Naive thymus-derived CD8-positive, alpha-beta T cell (primary cell): ENCODE measurements at regions of chr17 and their contacts with region 1.

Region 1: DNA sequence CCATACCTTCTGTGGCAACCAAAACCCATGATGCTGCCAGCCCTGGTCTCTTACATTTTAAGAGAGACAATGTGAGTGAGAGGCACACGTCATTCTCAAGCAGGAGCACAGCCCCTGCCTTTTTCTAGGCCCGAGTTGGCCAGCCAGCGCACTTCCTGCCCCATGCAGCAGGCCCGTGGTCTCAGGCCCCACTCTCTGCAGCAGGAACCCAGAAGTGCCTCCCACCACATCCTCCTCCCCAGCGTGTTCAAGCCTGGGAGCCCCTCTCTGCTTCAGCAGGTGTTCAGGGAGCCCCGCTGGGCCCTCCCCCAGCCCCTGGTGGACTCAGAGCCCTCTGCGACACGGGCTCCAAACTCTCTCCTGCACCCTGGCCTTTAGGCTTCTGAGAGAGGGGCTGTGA is 30.5 kb downstream of the ITGAE start:
- DNase-seq: peak in 9 of 10 donors; percentile 51 to 83 (median 74)
- ATAC-seq: peak; percentile 68 to 83
- H3K4me3 Mint-ChIP-seq: peak overlapping the region; percentile 38 to 85 (median 58)
- H3K27ac Mint-ChIP-seq: peak overlapping the region; percentile 82 to 98 (median 94)
- H3K4me1 Mint-ChIP-seq: peaks cover 39 to 75% (median 69%) of the 10 kb centered on the region in 4 donors
- H3K27me3 Mint-ChIP-seq: no peaks in the 10 kb centered on the region

Region 2: DNA sequence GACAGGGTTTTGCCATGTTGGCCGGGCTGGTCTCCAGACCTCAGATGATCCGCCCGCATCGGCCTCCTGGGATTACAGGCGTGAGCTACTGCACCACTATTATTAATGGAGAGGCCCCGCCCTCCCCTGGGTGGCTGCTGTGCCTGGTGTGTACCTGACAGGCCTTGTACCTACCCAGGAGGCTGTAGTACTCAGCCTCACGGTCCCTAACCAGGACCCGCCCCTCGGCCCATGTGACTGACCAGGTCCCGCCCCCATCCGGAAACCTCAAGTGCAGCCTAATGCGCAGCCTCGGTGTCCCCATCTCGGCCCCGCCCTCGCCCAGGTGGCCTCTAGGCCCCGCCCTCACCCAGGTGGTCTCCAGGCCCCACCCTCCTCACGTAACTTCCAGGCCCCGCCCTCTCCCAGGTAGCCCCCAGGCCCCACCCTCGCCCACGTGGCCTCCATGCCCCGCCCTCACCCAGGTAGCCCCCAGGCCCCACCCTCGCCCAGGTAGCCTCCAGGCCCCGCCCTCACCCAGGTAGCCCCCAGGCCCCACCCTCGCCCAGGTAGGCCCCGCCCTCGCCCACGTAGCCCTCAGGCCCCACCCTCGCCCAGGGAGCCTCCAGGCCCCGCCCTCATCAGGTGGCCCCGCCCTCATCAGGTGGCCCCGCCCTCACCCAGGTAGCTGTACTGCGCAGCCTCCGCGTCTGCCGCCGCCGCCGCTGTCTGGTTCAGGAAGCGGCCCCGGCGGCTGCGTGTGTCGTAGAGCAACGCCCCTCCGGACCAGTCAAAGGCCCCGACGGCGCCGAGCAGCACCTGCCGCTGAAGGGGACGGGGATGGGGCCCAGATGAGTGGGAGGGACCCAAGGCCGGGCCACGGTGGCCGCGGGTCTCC is 15.8 kb before region 1 on chr17:
- POLR2A ChIA-PET with region 1: interaction called, 13 read pairs
- DNase-seq: peak; percentile 66 to 89 (median 80)
- ATAC-seq: peak; percentile 88 to 90
- H3K4me3 Mint-ChIP-seq: peak overlapping the region in 7 of 10 donors; percentile 44 to 79 (median 58)
- H3K27ac Mint-ChIP-seq: peak overlapping the region in 9 of 10 donors; percentile 53 to 94 (median 80)
- H3K4me1 Mint-ChIP-seq: peaks cover 18 to 47% (median 36%) of the 10 kb centered on the region in 4 donors
- H3K27me3 Mint-ChIP-seq: no peaks in the 10 kb centered on the region

Region 3: DNA sequence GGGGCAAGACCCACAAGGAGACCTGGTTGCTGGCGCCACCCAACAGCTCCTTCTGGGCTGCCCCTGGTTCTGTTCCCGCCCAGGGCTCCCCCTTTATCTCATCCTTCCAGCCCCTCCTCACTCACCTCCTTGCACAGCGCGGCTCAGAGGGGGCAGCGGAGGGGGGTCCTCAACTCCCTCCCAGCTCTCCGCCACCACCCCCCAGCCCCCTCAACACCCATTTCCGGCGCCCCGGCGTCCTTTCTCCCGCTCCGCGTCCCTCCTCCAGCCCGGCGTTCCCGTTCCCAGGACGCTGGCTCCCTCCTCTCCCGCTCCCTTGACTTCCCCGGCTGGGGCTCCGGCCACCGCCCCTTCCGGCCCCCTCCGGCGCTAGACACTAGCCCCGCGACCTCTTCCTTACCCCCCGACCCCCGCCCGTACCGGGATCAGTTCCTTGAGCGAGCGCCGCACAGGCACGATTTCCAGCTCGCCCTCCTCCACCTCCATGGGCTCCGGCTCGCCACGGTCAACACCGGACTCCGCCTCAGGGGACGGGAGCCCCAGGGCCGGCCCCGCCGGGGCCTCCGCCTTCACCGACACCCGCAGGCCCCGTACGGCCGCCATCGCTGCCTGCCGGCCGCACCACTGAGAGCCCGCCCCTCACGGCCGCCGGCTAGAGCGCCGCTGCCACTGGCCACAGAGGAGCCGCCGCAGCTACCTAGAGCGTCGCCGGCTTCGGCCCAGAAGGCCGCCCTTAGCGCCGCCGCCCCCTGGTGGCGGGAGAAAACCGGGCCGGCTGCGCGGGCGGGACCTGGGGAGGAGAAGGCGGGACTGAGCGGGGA is 75.4 kb after region 1 on chr17 and contains the start of gene NCBP3:
- POLR2A ChIA-PET with region 1: interaction called, 10 read pairs
- DNase-seq: peak; percentile 82 to 94 (median 90)
- ATAC-seq: peak; percentile 97
- H3K4me3 Mint-ChIP-seq: peak within 1 kb of the TSS; percentile 85 to 97 (median 90)
- H3K27ac Mint-ChIP-seq: peak within 1 kb of the TSS; percentile 82 to 96 (median 91)
- H3K4me1 Mint-ChIP-seq: peaks cover 10 to 40% (median 30%) of the 10 kb centered on the region in 4 donors
- H3K27me3 Mint-ChIP-seq: peaks cover 0 to 1% (median 0%) of the 10 kb centered on the region in 5 donors
- polyA plus RNA-seq, gene NCBP3: 9.3 to 15.5 (median 9.3) TPM